Caco-2 (cell line): ENCODE measurements at regions of chr2 and their contacts with region 1.

Region 1: GRCh38 chr2:122055521-122055931 is 300.1 kb downstream of the TSN start:
- DNase-seq: no peak
- H3K4me3 ChIP-seq: no peak overlapping the region
- H3K4me3 Mint-ChIP-seq: no peak overlapping the region
- H3K27ac Mint-ChIP-seq: no peak overlapping the region
- H3K4me1 ChIP-seq: peaks cover 34% of the 10 kb centered on the region
- H3K4me1 Mint-ChIP-seq: peaks cover 23% of the 10 kb centered on the region
- H3K27me3 ChIP-seq: no peaks in the 10 kb centered on the region
- H3K27me3 Mint-ChIP-seq: no peaks in the 10 kb centered on the region
- CTCF ChIP-seq: no peak

Region 2: GRCh38 chr2:122019724-122020123 is 35.8 kb before region 1 on chr2:
- CTCF ChIA-PET with region 1: no interaction called
- POLR2A ChIA-PET with region 1: no interaction called
- intact Hi-C with region 1: loop called (anchors 5 kb)
- DNase-seq: peak; percentile 24 to 48
- H3K4me3 ChIP-seq: no peak overlapping the region
- H3K4me3 Mint-ChIP-seq: peak overlapping the region; percentile 26
- H3K27ac Mint-ChIP-seq: no peak overlapping the region
- H3K4me1 ChIP-seq: peaks cover 14% of the 10 kb centered on the region; the same call in 1 of the 2 replicates
- H3K4me1 Mint-ChIP-seq: peaks cover 18% of the 10 kb centered on the region
- H3K27me3 ChIP-seq: no peaks in the 10 kb centered on the region
- H3K27me3 Mint-ChIP-seq: no peaks in the 10 kb centered on the region
- CTCF ChIP-seq: no peak

Region 3: DNA sequence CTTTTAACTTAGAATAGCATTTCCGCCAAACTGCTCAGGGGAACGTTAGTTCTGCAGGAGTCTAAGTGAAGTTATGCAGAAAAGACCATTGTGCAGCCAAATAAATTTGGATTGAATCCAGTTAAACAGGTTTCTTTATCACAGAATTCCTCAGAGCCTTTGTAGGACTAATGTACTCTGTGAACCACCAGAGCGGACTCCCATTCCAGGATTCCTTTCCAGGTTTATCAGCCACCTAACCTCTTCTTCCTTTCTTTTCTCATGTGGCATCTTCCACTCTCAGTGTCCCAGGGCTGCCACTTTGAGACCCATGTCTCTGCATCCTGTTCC is 50.3 kb after region 1 on chr2:
- CTCF ChIA-PET with region 1: no interaction called
- POLR2A ChIA-PET with region 1: no interaction called
- intact Hi-C with region 1: loop called (anchors 5 kb)
- DNase-seq: peak; percentile 63 to 68
- H3K4me3 ChIP-seq: no peak overlapping the region
- H3K4me3 Mint-ChIP-seq: peak overlapping the region; percentile 66
- H3K27ac Mint-ChIP-seq: peak overlapping the region; percentile 65
- H3K4me1 ChIP-seq: peaks cover 30% of the 10 kb centered on the region
- H3K4me1 Mint-ChIP-seq: peaks cover 50% of the 10 kb centered on the region
- H3K27me3 ChIP-seq: no peaks in the 10 kb centered on the region
- H3K27me3 Mint-ChIP-seq: no peaks in the 10 kb centered on the region
- CTCF ChIP-seq: no peak

Region 4: GRCh38 chr2:122236152-122236874 is 180.8 kb after region 1 on chr2:
- CTCF ChIA-PET with region 1: no interaction called
- POLR2A ChIA-PET with region 1: no interaction called
- intact Hi-C with region 1: no loop called
- DNase-seq: no peak
- H3K4me3 ChIP-seq: no peak overlapping the region
- H3K4me3 Mint-ChIP-seq: no peak overlapping the region
- H3K27ac Mint-ChIP-seq: no peak overlapping the region
- H3K4me1 ChIP-seq: no peaks in the 10 kb centered on the region
- H3K4me1 Mint-ChIP-seq: no peaks in the 10 kb centered on the region
- H3K27me3 ChIP-seq: no peaks in the 10 kb centered on the region; the same call in 1 of the 2 replicates
- H3K27me3 Mint-ChIP-seq: peaks cover 33% of the 10 kb centered on the region
- CTCF ChIP-seq: no peak

Region 5: GRCh38 chr2:122433123-122433754 is 377.7 kb after region 1 on chr2:
- CTCF ChIA-PET with region 1: no interaction called
- POLR2A ChIA-PET with region 1: no interaction called
- intact Hi-C with region 1: loop called (anchors 2 kb)
- DNase-seq: peak; percentile 69 to 86
- H3K4me3 ChIP-seq: no peak overlapping the region
- H3K4me3 Mint-ChIP-seq: peak overlapping the region; percentile 28
- H3K27ac Mint-ChIP-seq: peak overlapping the region; percentile 66
- H3K4me1 ChIP-seq: peaks cover 24% of the 10 kb centered on the region
- H3K4me1 Mint-ChIP-seq: peaks cover 21% of the 10 kb centered on the region
- H3K27me3 ChIP-seq: no peaks in the 10 kb centered on the region
- H3K27me3 Mint-ChIP-seq: no peaks in the 10 kb centered on the region
- CTCF ChIP-seq: no peak